Gastrocnemius medialis (tissue), 4 donors: ENCODE measurements at regions of chr6 and their contacts with region 1.

Region 1: DNA sequence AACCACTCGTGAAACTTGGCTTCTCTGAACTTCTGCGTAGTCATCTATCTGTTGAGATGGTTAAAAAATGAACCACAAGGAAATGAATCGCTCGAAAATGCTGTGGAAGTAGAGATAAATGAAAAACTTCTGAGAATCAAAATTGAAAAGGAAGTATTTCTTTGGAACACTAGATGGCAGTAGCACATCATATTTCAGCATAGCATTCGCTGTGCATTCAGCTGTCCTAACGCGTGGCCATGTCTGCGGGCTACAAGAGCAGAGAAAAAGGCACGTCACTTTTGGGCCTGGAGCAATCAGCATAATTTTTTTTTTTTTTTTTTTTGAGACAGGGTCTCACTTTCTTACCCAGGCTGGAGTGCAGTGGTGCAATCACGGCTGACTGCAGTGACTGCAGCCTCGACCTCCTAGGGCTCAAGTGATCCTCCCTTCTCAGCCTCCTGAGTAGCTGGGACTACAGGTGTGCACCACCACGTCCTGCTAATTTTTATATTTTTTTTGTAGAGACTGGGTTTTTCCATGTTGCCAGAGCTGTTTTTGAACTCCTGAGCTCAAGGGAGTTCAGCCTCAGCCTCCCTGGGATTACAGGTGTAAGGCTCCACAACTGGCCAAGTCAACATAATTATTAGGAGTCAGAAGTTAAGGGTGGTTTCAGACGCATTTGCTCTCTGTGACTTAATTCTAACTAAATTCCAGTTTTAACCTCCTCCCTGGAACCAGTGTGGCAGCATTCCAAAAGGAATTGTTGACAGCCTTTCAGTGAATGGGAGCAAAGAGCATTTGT is 8.8 kb upstream of the PERP start:
- DNase-seq: peak; percentile 20 to 33
- ATAC-seq: peak; percentile 89 to 92
- H3K4me3 ChIP-seq: no peak overlapping the region
- H3K27ac ChIP-seq: no peak overlapping the region
- H3K4me1 ChIP-seq: no peaks in the 10 kb centered on the region
- H3K27me3 ChIP-seq: no peaks in the 10 kb centered on the region
- CTCF ChIP-seq: peak; percentile 60 to 80 (median 75)
- POLR2A ChIP-seq: no peak

Region 2: DNA sequence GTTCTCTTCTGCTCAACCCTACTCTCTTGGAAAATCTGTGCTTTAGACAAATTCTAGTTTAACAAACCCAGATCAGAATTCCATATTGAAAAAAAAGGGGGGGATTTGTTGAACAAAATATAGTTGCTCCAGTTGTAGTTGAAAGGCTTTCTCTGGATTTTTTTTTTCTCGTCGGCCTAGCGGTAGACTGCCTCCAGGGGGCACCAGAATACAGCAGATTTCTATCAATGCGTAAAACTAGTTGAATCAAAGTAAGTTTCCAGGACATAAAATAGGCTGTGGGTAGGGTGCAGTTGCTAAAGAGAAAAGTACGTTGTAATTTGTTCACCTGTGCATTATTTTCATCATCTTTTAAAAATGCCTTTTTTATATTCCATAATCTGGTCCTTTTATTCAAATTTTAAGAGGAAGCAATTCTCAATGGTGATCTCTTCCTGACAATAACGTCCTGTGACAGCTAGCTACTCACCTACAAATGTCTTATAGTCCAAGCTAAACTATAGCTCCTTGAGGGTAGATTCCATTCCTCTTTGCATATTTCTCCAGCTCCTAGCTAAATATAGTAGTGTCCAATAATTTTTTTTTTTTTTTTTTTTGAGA is 114.2 kb before region 1 on chr6:
- in situ Hi-C with region 1: loop called (anchors 5 kb)
- intact Hi-C with region 1: no loop called
- DNase-seq: no peak
- ATAC-seq: no peak
- H3K4me3 ChIP-seq: no peak overlapping the region
- H3K27ac ChIP-seq: no peak overlapping the region
- H3K4me1 ChIP-seq: no peaks in the 10 kb centered on the region
- H3K27me3 ChIP-seq: no peaks in the 10 kb centered on the region
- CTCF ChIP-seq: peak; percentile 47 to 80 (median 70)
- POLR2A ChIP-seq: no peak

Region 3: GRCh38 chr6:138509371-138509770 is 393.3 kb after region 1 on chr6:
- in situ Hi-C with region 1: loop called in 3 of 4 experiments (anchors 5 to 10 kb)
- intact Hi-C with region 1: loop called (anchors 5 kb)
- DNase-seq: no peak
- ATAC-seq: no peak
- H3K4me3 ChIP-seq: no peak overlapping the region
- H3K27ac ChIP-seq: no peak overlapping the region
- H3K4me1 ChIP-seq: no peaks in the 10 kb centered on the region
- H3K27me3 ChIP-seq: no peaks in the 10 kb centered on the region
- CTCF ChIP-seq: peak in 3 of 5 experiments; percentile 19 to 48 (median 37)
- POLR2A ChIP-seq: no peak

Region 4: GRCh38 chr6:138588805-138589434 is 472.9 kb after region 1 on chr6:
- in situ Hi-C with region 1: loop called in 3 of 4 experiments (anchors 5 to 10 kb)
- intact Hi-C with region 1: loop called (anchors 1 kb)
- DNase-seq: peak in 1 of 2 donors; percentile 12
- ATAC-seq: peak; percentile 43 to 63
- H3K4me3 ChIP-seq: no peak overlapping the region
- H3K27ac ChIP-seq: no peak overlapping the region
- H3K4me1 ChIP-seq: peaks cover 0 to 12% of the 10 kb centered on the region in 2 donors
- H3K27me3 ChIP-seq: no peaks in the 10 kb centered on the region
- CTCF ChIP-seq: peak; percentile 82 to 88 (median 83)
- POLR2A ChIP-seq: no peak

Region 5: GRCh38 chr6:138765896-138766655 is 650.0 kb after region 1 on chr6:
- in situ Hi-C with region 1: loop called in 3 of 4 experiments (anchors 10 to 25 kb)
- intact Hi-C with region 1: loop called (anchors 5 kb)
- DNase-seq: no peak
- ATAC-seq: no peak
- H3K4me3 ChIP-seq: no peak overlapping the region
- H3K27ac ChIP-seq: no peak overlapping the region
- H3K4me1 ChIP-seq: no peaks in the 10 kb centered on the region
- H3K27me3 ChIP-seq: no peaks in the 10 kb centered on the region
- CTCF ChIP-seq: peak; percentile 34 to 74 (median 62)
- POLR2A ChIP-seq: no peak